ENCODE measurements at regions of chr1 and their contacts with region 1.

Region 1: GRCh38 chr1:21232044-21232443 is 55.3 kb upstream of the EIF4G3 start:
- DNase-seq: peak in 4 of 5 donors; percentile 33 to 49 (median 39)
- H3K4me3 ChIP-seq: no peak overlapping the region
- H3K4me3 Mint-ChIP-seq: no peak overlapping the region
- H3K27ac ChIP-seq: no peak overlapping the region
- H3K27ac Mint-ChIP-seq: peak overlapping the region in 4 of 7 donors; percentile 6 to 77 (median 44)
- H3K4me1 ChIP-seq: no peaks in the 10 kb centered on the region
- H3K4me1 Mint-ChIP-seq: peaks cover 0 to 2% (median 0%) of the 10 kb centered on the region in 4 donors
- H3K27me3 ChIP-seq: no peaks in the 10 kb centered on the region
- H3K27me3 Mint-ChIP-seq: no peaks in the 10 kb centered on the region

Region 2: DNA sequence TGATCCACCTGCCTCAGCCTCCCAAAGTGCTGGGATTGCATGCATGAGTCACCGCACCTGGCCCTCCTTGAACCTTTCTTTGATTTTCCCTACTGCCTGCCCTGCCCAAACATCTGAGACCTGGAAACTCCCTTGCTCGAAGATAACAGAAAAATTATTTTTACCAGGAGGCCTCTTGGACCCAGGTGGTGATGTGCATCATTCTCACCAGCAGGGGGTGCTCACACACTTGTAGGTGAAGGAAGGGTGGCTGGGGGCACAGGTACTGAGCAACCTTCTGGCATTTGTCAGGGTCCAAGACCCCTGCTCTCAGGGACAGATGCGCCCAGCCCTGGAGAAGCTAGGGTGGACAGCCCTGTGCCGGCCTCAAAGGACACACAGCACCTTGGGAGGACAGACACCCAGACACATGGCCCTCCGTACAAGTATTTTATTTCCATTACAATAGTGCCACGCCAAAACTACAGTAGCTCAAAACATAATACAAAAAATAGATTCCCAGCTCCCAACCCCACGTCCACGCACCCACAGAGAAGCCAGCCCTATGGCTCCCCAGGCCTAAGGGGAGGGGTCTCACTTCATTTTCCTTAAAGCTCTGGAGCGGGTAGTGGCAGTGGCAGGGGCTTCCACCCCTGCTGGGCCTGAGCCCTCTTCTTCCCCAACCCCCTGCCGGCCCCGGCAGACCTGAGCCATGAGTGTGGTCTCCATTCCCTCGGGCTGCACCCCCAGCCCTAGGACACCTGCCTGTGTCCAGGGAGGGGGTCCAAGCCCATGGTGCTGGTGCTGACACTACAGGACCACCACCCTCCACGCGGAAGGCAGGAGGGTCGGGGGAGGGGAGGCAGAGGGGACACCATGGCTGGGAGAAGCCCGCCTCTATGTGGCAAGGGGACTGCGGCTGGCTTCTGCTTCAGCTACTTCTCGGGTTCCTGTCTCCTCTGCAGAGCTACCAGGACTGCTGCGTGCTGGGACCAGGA is 14.9 kb before region 1 on chr1:
- CTCF ChIA-PET with region 1: interaction called, 40 read pairs
- POLR2A ChIA-PET with region 1: no interaction called
- intact Hi-C with region 1: no loop called
- DNase-seq: peak; percentile 56 to 70 (median 61)
- H3K4me3 ChIP-seq: no peak overlapping the region
- H3K4me3 Mint-ChIP-seq: no peak overlapping the region
- H3K27ac ChIP-seq: no peak overlapping the region
- H3K27ac Mint-ChIP-seq: peak overlapping the region in 6 of 7 donors; percentile 27 to 80 (median 68)
- H3K4me1 ChIP-seq: no peaks in the 10 kb centered on the region
- H3K4me1 Mint-ChIP-seq: peaks cover 2 to 9% (median 4%) of the 10 kb centered on the region in 4 donors
- H3K27me3 ChIP-seq: no peaks in the 10 kb centered on the region
- H3K27me3 Mint-ChIP-seq: no peaks in the 10 kb centered on the region

Region 3: GRCh38 chr1:21244986-21245687 is 13.1 kb after region 1 on chr1:
- CTCF ChIA-PET with region 1: interaction called, 67 read pairs
- POLR2A ChIA-PET with region 1: no interaction called
- intact Hi-C with region 1: no loop called
- DNase-seq: peak in 1 of 5 donors; percentile 10
- H3K4me3 ChIP-seq: no peak overlapping the region
- H3K4me3 Mint-ChIP-seq: no peak overlapping the region
- H3K27ac ChIP-seq: no peak overlapping the region
- H3K27ac Mint-ChIP-seq: peak overlapping the region in 3 of 7 donors; percentile 12 to 53 (median 50)
- H3K4me1 ChIP-seq: no peaks in the 10 kb centered on the region
- H3K4me1 Mint-ChIP-seq: peaks cover 0 to 3% (median under 1%) of the 10 kb centered on the region in 4 donors
- H3K27me3 ChIP-seq: no peaks in the 10 kb centered on the region
- H3K27me3 Mint-ChIP-seq: no peaks in the 10 kb centered on the region

Region 4: GRCh38 chr1:21334214-21335087 is 102.4 kb after region 1 on chr1:
- CTCF ChIA-PET with region 1: interaction called, 16 read pairs
- POLR2A ChIA-PET with region 1: no interaction called
- intact Hi-C with region 1: no loop called
- DNase-seq: peak; percentile 87 to 93 (median 89)
- H3K4me3 ChIP-seq: peak overlapping the region; percentile 17 to 44
- H3K4me3 Mint-ChIP-seq: peak overlapping the region; percentile 80 to 94 (median 90)
- H3K27ac ChIP-seq: peak overlapping the region; percentile 82
- H3K27ac Mint-ChIP-seq: peak overlapping the region; percentile 92 to 99 (median 98)
- H3K4me1 ChIP-seq: peaks cover 94% of the 10 kb centered on the region
- H3K4me1 Mint-ChIP-seq: peaks cover 62 to 98% (median 81%) of the 10 kb centered on the region in 4 donors
- H3K27me3 ChIP-seq: no peaks in the 10 kb centered on the region
- H3K27me3 Mint-ChIP-seq: no peaks in the 10 kb centered on the region

Region 5: DNA sequence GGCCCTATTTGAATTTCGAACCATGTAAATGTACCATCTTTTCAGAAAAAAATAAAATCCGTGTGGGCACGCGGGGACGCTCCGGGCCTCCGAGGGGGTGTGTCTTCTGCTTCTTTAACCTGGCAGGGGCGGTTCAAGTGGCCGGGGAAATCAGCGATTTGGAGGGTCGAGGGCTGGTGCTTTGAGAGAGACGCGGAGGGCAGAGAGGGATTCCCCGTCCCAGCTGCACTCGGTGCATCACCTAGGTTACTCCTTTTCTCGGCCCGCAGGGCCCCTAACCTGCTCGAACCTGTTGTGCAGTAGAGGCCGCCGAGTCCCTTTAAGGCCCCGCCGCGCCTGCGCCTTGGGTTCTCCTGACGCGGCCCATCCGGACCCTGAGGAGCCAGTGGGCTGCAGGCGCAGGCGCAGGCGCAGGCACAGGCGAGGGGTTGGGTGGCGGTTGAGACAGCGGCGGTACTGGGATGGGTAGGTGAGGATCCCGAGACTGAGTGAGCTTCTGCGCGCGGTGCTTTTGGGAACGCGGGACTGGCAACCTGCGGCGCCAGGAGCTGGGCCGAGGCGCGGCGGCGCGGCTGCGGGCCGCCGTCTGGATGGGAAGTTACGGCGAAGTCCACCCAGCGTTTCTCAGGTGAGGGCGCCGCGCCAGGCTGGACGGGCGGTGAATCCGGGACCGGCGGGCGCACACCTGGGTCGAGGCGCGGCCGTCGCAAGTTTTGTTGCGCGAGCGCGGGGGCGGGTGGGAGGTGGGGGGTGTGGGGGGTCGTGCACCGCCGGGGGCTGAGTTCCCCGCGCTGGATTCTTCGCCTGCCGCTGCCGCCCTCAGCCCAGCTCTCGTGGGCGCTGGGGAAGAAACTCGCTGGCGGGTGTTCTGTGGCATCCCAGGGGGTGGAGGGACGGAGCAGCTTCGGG is 207.9 kb after region 1 on chr1 and contains the start of gene NBPF3:
- CTCF ChIA-PET with region 1: no interaction called
- POLR2A ChIA-PET with region 1: no interaction called
- intact Hi-C with region 1: loop called (anchors 10 kb)
- DNase-seq: peak; percentile 67 to 90 (median 69)
- H3K4me3 ChIP-seq: peak within 1 kb of the TSS; percentile 57 to 73
- H3K4me3 Mint-ChIP-seq: peak within 1 kb of the TSS; percentile 87 to 97 (median 92)
- H3K27ac ChIP-seq: peak within 1 kb of the TSS; percentile 49
- H3K27ac Mint-ChIP-seq: peak within 1 kb of the TSS; percentile 75 to 96 (median 88)
- H3K4me1 ChIP-seq: peaks cover 8% of the 10 kb centered on the region
- H3K4me1 Mint-ChIP-seq: peaks cover 7 to 28% (median 15%) of the 10 kb centered on the region in 4 donors
- H3K27me3 ChIP-seq: no peaks in the 10 kb centered on the region
- H3K27me3 Mint-ChIP-seq: peaks cover 0 to 4% of the 10 kb centered on the region in 2 donors
- total RNA-seq, gene NBPF3: 14.3 TPM

Region 6: GRCh38 chr1:21659099-21659923 is 427.3 kb after region 1 on chr1:
- CTCF ChIA-PET with region 1: interaction called, 7 read pairs
- POLR2A ChIA-PET with region 1: no interaction called
- intact Hi-C with region 1: loop called (anchors 2 kb)
- DNase-seq: peak; percentile 81 to 86 (median 83)
- H3K4me3 ChIP-seq: no peak overlapping the region
- H3K4me3 Mint-ChIP-seq: peak overlapping the region in 4 of 8 donors; percentile 31 to 65 (median 40)
- H3K27ac ChIP-seq: no peak overlapping the region
- H3K27ac Mint-ChIP-seq: peak overlapping the region in 2 of 7 donors; percentile 7 to 57
- H3K4me1 ChIP-seq: peaks cover 8% of the 10 kb centered on the region
- H3K4me1 Mint-ChIP-seq: peaks cover 0 to 7% (median 5%) of the 10 kb centered on the region in 4 donors
- H3K27me3 ChIP-seq: no peaks in the 10 kb centered on the region
- H3K27me3 Mint-ChIP-seq: peaks cover 9 to 15% of the 10 kb centered on the region in 2 donors